Activated B cell treated with CpG ODN at 0.5 μM for 24 hours (primary cell): ENCODE measurements at regions of chr15 and their contacts with region 1.

Region 1: GRCh38 chr15:79874245-79874644 is 22.6 kb downstream of the MTHFS start:
- DNase-seq: no peak
- ATAC-seq: no peak
- H3K4me3 Mint-ChIP-seq: no peak overlapping the region
- H3K27ac Mint-ChIP-seq: no peak overlapping the region
- H3K4me1 Mint-ChIP-seq: peaks cover 7% of the 10 kb centered on the region
- H3K27me3 Mint-ChIP-seq: no peaks in the 10 kb centered on the region
- CTCF ChIP-seq: no peak

Region 2: DNA sequence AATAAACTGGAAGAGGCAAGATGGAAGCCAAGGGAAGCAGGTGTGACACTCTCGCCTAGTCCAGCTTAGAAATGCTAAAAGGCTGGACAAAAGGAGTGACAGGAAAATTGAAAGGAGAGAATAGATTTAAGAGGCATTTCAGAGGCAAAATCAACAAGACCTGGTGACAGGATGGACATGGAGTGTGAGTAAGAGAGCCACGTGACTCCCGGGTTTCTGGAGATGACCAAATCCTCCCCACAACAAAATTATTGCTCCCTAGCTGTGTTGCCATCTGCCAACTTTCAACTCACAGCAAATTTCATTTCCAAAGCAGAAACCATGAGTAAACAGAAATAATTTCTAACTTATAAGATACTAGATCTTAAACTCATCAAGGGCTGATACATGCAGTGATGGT is 30.0 kb before region 1 on chr15:
- CTCF ChIA-PET with region 1: no interaction called
- POLR2A ChIA-PET with region 1: no interaction called
- intact Hi-C with region 1: no loop called
- DNase-seq: no peak
- ATAC-seq: no peak
- H3K4me3 Mint-ChIP-seq: no peak overlapping the region
- H3K27ac Mint-ChIP-seq: no peak overlapping the region
- H3K4me1 Mint-ChIP-seq: no peaks in the 10 kb centered on the region
- H3K27me3 Mint-ChIP-seq: no peaks in the 10 kb centered on the region
- CTCF ChIP-seq: no peak

Region 3: GRCh38 chr15:79863886-79864285 is 10.4 kb before region 1 on chr15:
- CTCF ChIA-PET with region 1: no interaction called
- POLR2A ChIA-PET with region 1: no interaction called
- intact Hi-C with region 1: no loop called
- DNase-seq: no peak
- ATAC-seq: no peak
- H3K4me3 Mint-ChIP-seq: no peak overlapping the region
- H3K27ac Mint-ChIP-seq: no peak overlapping the region
- H3K4me1 Mint-ChIP-seq: peaks cover 3% of the 10 kb centered on the region
- H3K27me3 Mint-ChIP-seq: no peaks in the 10 kb centered on the region
- CTCF ChIP-seq: no peak

Region 4: DNA sequence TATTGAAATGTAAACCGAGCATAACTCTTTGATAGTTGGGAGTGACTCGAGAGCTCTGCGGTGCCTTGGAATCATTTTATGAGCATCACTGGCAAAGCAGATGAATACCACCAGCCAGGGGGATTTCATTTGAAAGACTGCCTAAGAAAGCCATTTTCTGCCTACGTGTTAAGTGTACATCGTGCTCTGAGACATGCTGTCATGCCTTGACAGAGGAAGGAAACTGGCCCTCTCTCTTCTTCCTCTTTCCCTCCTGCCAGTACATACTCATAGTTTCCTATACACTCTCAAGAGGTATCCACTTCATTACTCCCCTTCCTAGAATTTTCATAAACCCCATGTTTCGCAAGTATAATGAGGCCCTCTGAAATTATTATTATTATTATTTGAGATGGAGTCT is 87.9 kb after region 1 on chr15:
- CTCF ChIA-PET with region 1: no interaction called
- POLR2A ChIA-PET with region 1: interaction called, 10 read pairs
- intact Hi-C with region 1: no loop called
- DNase-seq: no peak
- ATAC-seq: peak; percentile 78
- H3K4me3 Mint-ChIP-seq: peak overlapping the region; percentile 36
- H3K27ac Mint-ChIP-seq: peak overlapping the region; percentile 71
- H3K4me1 Mint-ChIP-seq: peaks cover 60% of the 10 kb centered on the region
- H3K27me3 Mint-ChIP-seq: no peaks in the 10 kb centered on the region
- CTCF ChIP-seq: no peak